GM12878 (cell line): ENCODE measurements at regions of chr11 and their contacts with region 1.

Region 1: DNA sequence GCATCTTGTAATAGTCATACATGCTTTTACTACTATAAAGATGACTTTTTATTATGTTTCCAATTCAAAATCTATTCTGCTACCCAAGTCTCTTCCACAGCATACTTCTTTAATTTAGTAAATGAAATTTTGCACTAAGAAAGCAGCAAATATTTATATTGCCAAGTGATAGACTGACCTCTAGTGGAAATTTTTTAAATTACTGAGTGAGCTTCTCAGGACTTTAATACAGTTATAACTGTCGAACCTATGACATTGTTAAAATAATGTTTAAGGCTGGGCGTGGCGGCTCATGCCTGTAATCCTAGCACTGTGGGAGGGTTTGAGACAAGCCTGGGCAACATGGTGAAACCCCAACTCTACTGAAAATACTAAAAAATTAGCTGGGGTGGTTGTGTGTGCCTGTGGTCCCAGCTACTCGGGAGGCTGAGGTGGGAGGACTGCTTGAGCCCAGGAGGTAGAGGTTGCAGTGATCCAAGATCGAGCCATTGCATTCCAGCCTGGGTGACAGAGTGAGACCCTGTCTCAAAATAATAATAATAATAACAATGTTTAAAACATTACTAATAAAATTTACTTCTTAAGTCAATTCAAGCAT is 27.3 kb downstream of the STK33 start:
- DNase-seq: peak; percentile 32
- ATAC-seq: peak; percentile 78
- H3K4me3 ChIP-seq: no peak overlapping the region
- H3K27ac ChIP-seq: no peak overlapping the region
- H3K4me1 ChIP-seq: peaks cover 5% of the 10 kb centered on the region; the same call in 1 of the 2 replicates
- H3K27me3 ChIP-seq: no peaks in the 10 kb centered on the region
- CTCF ChIP-seq: peak; percentile 40 to 63 (median 45); a peak in 4 of 6 replicates
- EP300 ChIP-seq: no peak
- POLR2A ChIP-seq: no peak
- RAD21 ChIP-seq: peak; percentile 82

Region 2: GRCh38 chr11:8192016-8192895 is 374.5 kb before region 1 on chr11:
- CTCF ChIA-PET with region 1: interaction called, 53 read pairs
- POLR2A ChIA-PET with region 1: no interaction called
- RAD21 ChIA-PET with region 1: interaction called, 19 read pairs
- SMC1A ChIA-PET with region 1: interaction called, 18 read pairs
- in situ Hi-C with region 1: no loop called
- intact Hi-C with region 1: loop called (anchors 1 kb)
- DNase-seq: no peak
- ATAC-seq: peak; percentile 94
- H3K4me3 ChIP-seq: no peak overlapping the region
- H3K27ac ChIP-seq: no peak overlapping the region
- H3K4me1 ChIP-seq: no peaks in the 10 kb centered on the region
- H3K27me3 ChIP-seq: no peaks in the 10 kb centered on the region; a peak in 1 of 4 replicates
- CTCF ChIP-seq: peak; percentile 88 to 96 (median 90)
- EP300 ChIP-seq: no peak
- POLR2A ChIP-seq: no peak
- RAD21 ChIP-seq: peak; percentile 84

Region 3: GRCh38 chr11:8225589-8226036 is 341.1 kb before region 1 on chr11:
- CTCF ChIA-PET with region 1: interaction called, 66 read pairs
- POLR2A ChIA-PET with region 1: no interaction called
- RAD21 ChIA-PET with region 1: interaction called, 19 read pairs
- SMC1A ChIA-PET with region 1: interaction called, 29 read pairs
- in situ Hi-C with region 1: loop called (anchors 5 kb)
- intact Hi-C with region 1: loop called (anchors 1 kb)
- DNase-seq: no peak
- ATAC-seq: peak; percentile 87
- H3K4me3 ChIP-seq: no peak overlapping the region
- H3K27ac ChIP-seq: no peak overlapping the region
- H3K4me1 ChIP-seq: no peaks in the 10 kb centered on the region; the same call in 1 of the 2 replicates
- H3K27me3 ChIP-seq: no peaks in the 10 kb centered on the region
- CTCF ChIP-seq: peak; percentile 88 to 95 (median 90)
- EP300 ChIP-seq: no peak
- POLR2A ChIP-seq: no peak
- RAD21 ChIP-seq: peak; percentile 85

Region 4: DNA sequence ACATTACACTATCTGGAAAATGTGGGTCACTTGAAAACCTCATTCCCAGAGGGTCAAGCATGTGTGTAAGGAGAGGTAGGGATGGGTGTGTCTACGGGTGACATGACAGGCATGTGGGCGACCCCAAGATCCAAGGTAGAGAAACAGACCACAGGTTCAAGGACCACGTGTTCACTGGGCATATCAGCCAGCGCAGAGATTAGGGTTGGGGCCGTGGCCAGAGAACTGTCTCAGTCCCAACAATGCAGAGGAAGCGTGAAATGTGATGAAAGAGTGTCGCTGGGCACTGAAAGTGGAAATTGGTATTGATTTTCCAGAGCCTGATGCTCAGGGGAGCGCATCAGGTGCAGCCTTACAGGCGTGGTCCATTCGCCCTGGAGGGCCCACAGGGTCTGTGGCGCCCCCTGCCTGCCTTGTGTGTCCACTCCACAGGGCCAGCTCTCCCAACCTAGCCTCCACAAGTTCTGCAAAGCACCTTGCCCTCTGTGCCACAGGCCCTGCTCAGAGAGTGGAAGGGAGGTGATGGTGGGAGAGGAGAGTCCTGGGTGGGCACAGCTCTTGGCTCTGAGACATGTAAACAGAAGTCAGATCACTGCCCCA is 248.3 kb before region 1 on chr11:
- CTCF ChIA-PET with region 1: interaction called, 5 read pairs
- POLR2A ChIA-PET with region 1: no interaction called
- RAD21 ChIA-PET with region 1: interaction called, 3 read pairs
- SMC1A ChIA-PET with region 1: interaction called, 10 read pairs
- in situ Hi-C with region 1: no loop called
- intact Hi-C with region 1: no loop called
- DNase-seq: no peak
- ATAC-seq: peak; percentile 50; the same call in 2 of the 3 replicates
- H3K4me3 ChIP-seq: no peak overlapping the region
- H3K27ac ChIP-seq: no peak overlapping the region
- H3K4me1 ChIP-seq: no peaks in the 10 kb centered on the region
- H3K27me3 ChIP-seq: no peaks in the 10 kb centered on the region
- CTCF ChIP-seq: peak; percentile 30 to 45 (median 34); a peak in 4 of 6 replicates
- EP300 ChIP-seq: no peak
- POLR2A ChIP-seq: no peak
- RAD21 ChIP-seq: no peak

Region 5: DNA sequence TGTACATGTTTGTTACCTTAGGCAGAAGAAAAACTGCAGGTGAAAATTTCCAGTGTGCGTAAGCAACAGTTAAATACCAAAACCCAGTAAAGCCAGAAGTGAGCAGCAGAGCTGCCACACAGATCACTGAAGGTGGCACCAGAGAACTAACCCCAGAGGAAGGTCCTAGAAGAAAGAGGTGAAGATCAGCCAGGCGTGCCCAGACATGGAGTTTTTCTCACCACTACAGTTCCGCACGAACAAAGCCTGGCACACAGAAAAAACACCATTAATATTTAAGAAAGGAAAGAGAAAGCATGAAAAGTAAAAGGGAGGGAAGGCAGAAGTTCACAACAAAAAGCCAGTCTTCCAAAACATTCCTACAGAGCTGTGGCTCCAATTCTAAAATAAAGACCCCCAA is 33.4 kb before region 1 on chr11:
- CTCF ChIA-PET with region 1: interaction called, 68 read pairs
- POLR2A ChIA-PET with region 1: no interaction called
- RAD21 ChIA-PET with region 1: interaction called, 47 read pairs
- SMC1A ChIA-PET with region 1: interaction called, 46 read pairs
- in situ Hi-C with region 1: no loop called
- intact Hi-C with region 1: loop called (anchors 1 kb)
- DNase-seq: peak; percentile 86
- ATAC-seq: peak; percentile 94
- H3K4me3 ChIP-seq: peak overlapping the region; percentile 2; the same call in 1 of the 2 replicates
- H3K27ac ChIP-seq: peak overlapping the region; percentile 89
- H3K4me1 ChIP-seq: peaks cover 20% of the 10 kb centered on the region
- H3K27me3 ChIP-seq: no peaks in the 10 kb centered on the region
- CTCF ChIP-seq: peak; percentile 33 to 49 (median 47); a peak in 5 of 6 replicates
- EP300 ChIP-seq: no peak
- POLR2A ChIP-seq: no peak
- RAD21 ChIP-seq: peak; percentile 54

Region 6: GRCh38 chr11:8584511-8584910 is 17.8 kb after region 1 on chr11:
- CTCF ChIA-PET with region 1: interaction called, 17 read pairs
- POLR2A ChIA-PET with region 1: no interaction called
- RAD21 ChIA-PET with region 1: interaction called, 5 read pairs
- SMC1A ChIA-PET with region 1: interaction called, 9 read pairs
- in situ Hi-C with region 1: no loop called
- intact Hi-C with region 1: no loop called
- DNase-seq: no peak
- ATAC-seq: peak; percentile 35
- H3K4me3 ChIP-seq: no peak overlapping the region
- H3K27ac ChIP-seq: no peak overlapping the region
- H3K4me1 ChIP-seq: no peaks in the 10 kb centered on the region
- H3K27me3 ChIP-seq: no peaks in the 10 kb centered on the region
- CTCF ChIP-seq: no peak
- EP300 ChIP-seq: no peak
- POLR2A ChIP-seq: no peak
- RAD21 ChIP-seq: no peak

Region 7: DNA sequence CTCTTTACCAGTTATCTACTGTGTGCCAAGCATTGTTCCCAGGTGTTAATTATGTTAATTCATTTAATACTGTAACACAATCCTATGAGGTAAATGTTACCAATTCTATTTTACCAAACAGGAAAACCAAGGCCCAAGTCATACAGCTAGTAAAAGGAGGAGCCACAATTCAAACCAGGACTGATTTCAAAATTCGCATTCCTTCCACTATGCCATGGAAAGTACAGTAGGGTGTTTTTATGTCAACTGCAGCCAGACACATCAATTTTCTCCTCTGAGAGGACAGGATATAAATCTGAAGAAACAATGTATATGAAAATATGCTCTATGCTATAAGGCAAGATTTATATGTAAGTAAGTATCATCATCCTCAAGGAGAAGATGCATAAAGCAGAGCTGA is 220.2 kb after region 1 on chr11:
- CTCF ChIA-PET with region 1: no interaction called
- POLR2A ChIA-PET with region 1: no interaction called
- RAD21 ChIA-PET with region 1: no interaction called
- SMC1A ChIA-PET with region 1: no interaction called
- in situ Hi-C with region 1: no loop called
- intact Hi-C with region 1: no loop called
- DNase-seq: no peak
- ATAC-seq: no peak
- H3K4me3 ChIP-seq: no peak overlapping the region
- H3K27ac ChIP-seq: no peak overlapping the region
- H3K4me1 ChIP-seq: no peaks in the 10 kb centered on the region
- H3K27me3 ChIP-seq: no peaks in the 10 kb centered on the region
- CTCF ChIP-seq: no peak
- EP300 ChIP-seq: no peak
- POLR2A ChIP-seq: no peak
- RAD21 ChIP-seq: no peak